GM10248 (cell line): ENCODE measurements at regions of chr16 and their contacts with region 1.

Region 1: DNA sequence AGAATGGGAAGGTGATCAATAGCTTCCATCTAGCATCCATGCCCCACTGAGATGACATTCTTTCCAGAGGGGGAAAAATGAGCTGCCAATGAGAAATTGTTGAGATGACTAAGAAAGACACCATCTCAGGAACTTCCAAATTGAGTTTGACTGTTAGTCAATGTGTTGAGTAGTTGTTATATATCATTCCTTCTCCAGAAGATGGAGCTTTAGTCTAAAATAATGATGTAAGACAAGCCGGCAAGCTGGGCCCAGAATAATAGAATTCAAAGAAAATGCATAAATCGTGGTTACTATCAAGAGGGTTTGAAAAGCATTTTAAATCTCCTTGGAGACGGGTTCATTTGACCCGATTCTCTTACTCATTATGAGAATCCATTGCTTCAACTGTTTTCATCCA is 71.0 kb upstream of the ATF7IP2 start:
- DNase-seq: no peak
- CTCF ChIP-seq: no peak

Region 2: DNA sequence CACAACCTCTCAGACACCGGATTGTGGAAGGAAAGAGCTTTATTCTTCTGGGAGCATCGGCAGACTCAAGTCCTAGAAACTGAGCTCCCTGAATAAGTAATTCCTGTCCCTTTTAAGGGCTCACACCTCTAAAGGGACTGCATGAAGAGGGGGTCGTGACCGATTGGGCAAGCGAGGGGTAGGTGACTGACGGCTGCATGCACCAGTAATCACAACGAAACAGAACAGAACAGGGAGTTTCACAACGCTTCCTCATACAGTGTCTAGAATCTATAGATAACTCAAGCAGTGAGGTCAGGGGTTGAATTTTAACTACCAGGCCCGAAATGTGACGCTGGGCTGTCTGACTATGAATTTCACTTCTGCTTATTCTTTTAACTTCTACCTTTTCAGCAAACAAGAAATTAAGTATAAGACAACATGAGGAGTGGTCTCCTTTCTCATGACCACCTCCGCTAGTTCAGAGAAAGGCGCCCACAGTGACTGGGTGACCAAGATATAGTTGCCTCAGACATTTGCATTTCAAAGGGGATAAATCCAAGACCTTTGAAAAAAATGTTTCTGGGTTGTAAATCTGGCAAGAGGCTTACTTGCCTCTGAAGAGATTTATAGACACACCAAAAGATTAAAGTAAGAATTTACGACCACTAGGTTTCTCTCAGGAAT is 17.3 kb before region 1 on chr16:
- CTCF ChIA-PET with region 1: interaction called, 15 read pairs
- POLR2A ChIA-PET with region 1: no interaction called
- DNase-seq: peak; percentile 80
- CTCF ChIP-seq: no peak

Region 3: DNA sequence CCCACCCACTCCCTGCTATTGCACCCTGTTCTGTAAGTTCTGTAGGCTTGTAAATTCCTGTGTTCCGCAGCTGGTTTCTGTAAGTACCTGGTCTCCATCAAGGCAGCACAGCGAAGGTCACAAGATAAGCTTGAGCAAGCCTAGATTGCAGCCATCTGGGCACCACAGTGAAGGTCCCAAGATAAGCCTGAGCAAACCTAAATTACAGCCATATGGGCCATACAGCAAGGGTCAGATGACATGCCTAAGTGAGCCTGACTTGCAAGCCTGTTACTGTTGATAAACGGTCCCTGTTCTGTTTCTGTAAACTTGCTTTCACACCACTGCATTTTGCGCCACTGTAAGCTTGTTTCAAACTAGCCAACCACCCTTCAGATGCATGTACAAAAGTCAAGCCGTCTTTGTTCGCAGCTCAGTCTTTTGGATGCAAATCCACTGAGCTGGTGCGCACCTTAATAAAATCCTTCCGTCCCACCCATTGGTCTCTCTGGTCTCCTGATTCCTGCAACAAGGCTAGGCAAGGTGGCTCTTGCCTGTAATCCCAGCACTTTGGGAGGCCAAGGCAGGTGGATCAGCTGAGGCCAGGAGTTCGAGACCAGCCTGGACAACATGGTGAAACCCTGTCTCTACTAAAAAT is 28.4 kb after region 1 on chr16:
- CTCF ChIA-PET with region 1: no interaction called
- POLR2A ChIA-PET with region 1: no interaction called
- DNase-seq: no peak
- CTCF ChIP-seq: no peak